Activated T-helper 1 cell treated with anti-CD3 and anti-CD28 coated beads, Interleukin-12 subunit alpha, Interleukin-12 subunit beta, Interleukin-2, Interleukin-4 antibody, amounts not matched to agents 30 ng/mL and 10 ng/mL and 1 ng/mL, durations not matched to agents 14 hours and 24 hours and 36 hours (primary cell): ENCODE measurements at regions of chr2 and their contacts with region 1.

Region 1: GRCh38 chr2:75710577-75711253 is at the start of gene GCFC2:
- DNase-seq: peak; percentile 83
- H3K4me3 Mint-ChIP-seq: peak within 1 kb of the TSS; percentile 92
- H3K27ac Mint-ChIP-seq: peak within 1 kb of the TSS; percentile 96
- H3K4me1 Mint-ChIP-seq: peaks cover 41% of the 10 kb centered on the region
- H3K27me3 Mint-ChIP-seq: peaks cover 4% of the 10 kb centered on the region
- total RNA-seq, gene GCFC2: 37.5 and 39.9 TPM in 2 replicates

Region 2: GRCh38 chr2:75646583-75647425 is 63.9 kb before region 1 on chr2 and contains the start of gene MRPL19:
- intact Hi-C with region 1: loop called (anchors 1 kb)
- DNase-seq: peak; percentile 70
- H3K4me3 Mint-ChIP-seq: peak within 1 kb of the TSS; percentile 97
- H3K27ac Mint-ChIP-seq: peak within 1 kb of the TSS; percentile 95
- H3K4me1 Mint-ChIP-seq: peaks cover 35% of the 10 kb centered on the region
- H3K27me3 Mint-ChIP-seq: peaks cover 1% of the 10 kb centered on the region
- total RNA-seq, gene MRPL19: 74.5 and 75.0 TPM in 2 replicates

Region 3: GRCh38 chr2:75698918-75699317 is 11.8 kb before region 1 on chr2:
- intact Hi-C with region 1: loop called (anchors 2 kb)
- DNase-seq: no peak
- H3K4me3 Mint-ChIP-seq: no peak overlapping the region
- H3K27ac Mint-ChIP-seq: no peak overlapping the region
- H3K4me1 Mint-ChIP-seq: no peaks in the 10 kb centered on the region
- H3K27me3 Mint-ChIP-seq: no peaks in the 10 kb centered on the region